ENCODE measurements at regions of chr11 and their contacts with region 1.

Region 1: GRCh38 chr11:112280268-112281126 is 19.8 kb upstream of the PLET1 start:
- DNase-seq: peak; percentile 85
- H3K4me3 ChIP-seq: peak overlapping the region; percentile 53 to 61
- H3K27ac ChIP-seq: peak overlapping the region in 1 of 2 experiments; percentile 53; a peak in 1 of 4 replicates
- H3K4me1 ChIP-seq: peaks cover 4 to 8% of the 10 kb centered on the region in 2 experiments; a peak in 3 of 4 replicates
- H3K27me3 ChIP-seq: no peaks in the 10 kb centered on the region
- CTCF ChIP-seq: peak; percentile 81
- EP300 ChIP-seq: no peak
- RAD21 ChIP-seq: peak; percentile 93

Region 2: DNA sequence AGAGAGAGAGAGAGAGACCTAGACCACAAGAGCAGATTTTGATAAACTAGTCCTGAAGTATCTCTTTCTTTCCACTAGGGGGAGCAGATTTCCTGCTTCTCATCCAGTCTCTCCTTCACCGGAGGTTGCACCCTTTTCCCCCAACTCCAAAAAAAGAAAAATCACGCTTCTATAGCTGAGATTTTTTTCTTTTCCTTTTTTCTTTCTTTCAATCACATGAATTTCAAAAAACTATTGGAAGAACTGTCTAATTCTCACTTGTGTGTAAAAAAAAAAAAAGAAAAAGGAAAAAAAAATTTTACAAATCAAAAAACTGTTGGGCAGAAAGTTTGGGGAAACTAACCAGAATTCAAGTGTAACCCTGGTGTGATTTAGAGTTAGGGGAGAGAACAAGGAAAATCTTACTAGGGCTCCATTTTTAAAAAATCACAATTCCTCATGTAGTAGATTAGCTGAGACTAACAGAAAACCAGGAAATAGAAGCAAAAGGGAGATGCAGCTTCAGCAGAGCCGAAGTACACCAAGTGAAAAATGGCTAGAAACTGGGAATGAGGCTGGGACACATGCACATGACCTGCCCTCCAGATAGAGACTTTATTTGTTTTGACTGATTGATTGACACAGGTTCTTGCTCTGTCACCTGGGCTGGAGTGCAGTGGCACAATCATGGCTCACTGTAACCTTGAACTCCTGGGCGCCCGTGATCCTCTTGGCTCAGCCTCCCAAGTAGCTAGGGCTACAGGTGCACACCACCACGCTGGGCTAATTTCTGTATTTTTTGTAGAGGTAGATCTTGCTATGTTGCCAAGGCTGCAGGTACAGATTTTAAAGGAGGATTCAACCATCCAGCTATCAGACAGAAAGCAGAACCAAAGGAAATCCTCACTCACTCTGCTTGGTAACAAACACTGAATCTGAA is 166.7 kb before region 1 on chr11:
- CTCF ChIA-PET with region 1: interaction called, 76 read pairs
- POLR2A ChIA-PET with region 1: no interaction called
- DNase-seq: peak; percentile 64
- H3K4me3 ChIP-seq: peak overlapping the region in 1 of 2 experiments; percentile 38; a peak in 1 of 4 replicates
- H3K27ac ChIP-seq: no peak overlapping the region
- H3K4me1 ChIP-seq: peaks cover 0 to 4% of the 10 kb centered on the region in 2 experiments; a peak in 1 of 4 replicates
- H3K27me3 ChIP-seq: no peaks in the 10 kb centered on the region
- CTCF ChIP-seq: peak; percentile 73
- EP300 ChIP-seq: no peak
- RAD21 ChIP-seq: peak; percentile 76

Region 3: GRCh38 chr11:112206071-112206470 is 74.4 kb before region 1 on chr11:
- CTCF ChIA-PET with region 1: interaction called, 16 read pairs
- POLR2A ChIA-PET with region 1: no interaction called
- DNase-seq: no peak
- H3K4me3 ChIP-seq: no peak overlapping the region
- H3K27ac ChIP-seq: no peak overlapping the region
- H3K4me1 ChIP-seq: no peaks in the 10 kb centered on the region
- H3K27me3 ChIP-seq: no peaks in the 10 kb centered on the region
- CTCF ChIP-seq: no peak
- EP300 ChIP-seq: no peak
- RAD21 ChIP-seq: no peak

Region 4: GRCh38 chr11:112219476-112220232 is 60.8 kb before region 1 on chr11:
- CTCF ChIA-PET with region 1: interaction called, 620 read pairs
- POLR2A ChIA-PET with region 1: interaction called, 4 read pairs
- DNase-seq: peak; percentile 72
- H3K4me3 ChIP-seq: no peak overlapping the region; a peak in 1 of 4 replicates
- H3K27ac ChIP-seq: no peak overlapping the region
- H3K4me1 ChIP-seq: peaks cover 3 to 21% of the 10 kb centered on the region in 2 experiments
- H3K27me3 ChIP-seq: no peaks in the 10 kb centered on the region
- CTCF ChIP-seq: peak; percentile 78
- EP300 ChIP-seq: no peak
- RAD21 ChIP-seq: peak; percentile 95

Region 5: DNA sequence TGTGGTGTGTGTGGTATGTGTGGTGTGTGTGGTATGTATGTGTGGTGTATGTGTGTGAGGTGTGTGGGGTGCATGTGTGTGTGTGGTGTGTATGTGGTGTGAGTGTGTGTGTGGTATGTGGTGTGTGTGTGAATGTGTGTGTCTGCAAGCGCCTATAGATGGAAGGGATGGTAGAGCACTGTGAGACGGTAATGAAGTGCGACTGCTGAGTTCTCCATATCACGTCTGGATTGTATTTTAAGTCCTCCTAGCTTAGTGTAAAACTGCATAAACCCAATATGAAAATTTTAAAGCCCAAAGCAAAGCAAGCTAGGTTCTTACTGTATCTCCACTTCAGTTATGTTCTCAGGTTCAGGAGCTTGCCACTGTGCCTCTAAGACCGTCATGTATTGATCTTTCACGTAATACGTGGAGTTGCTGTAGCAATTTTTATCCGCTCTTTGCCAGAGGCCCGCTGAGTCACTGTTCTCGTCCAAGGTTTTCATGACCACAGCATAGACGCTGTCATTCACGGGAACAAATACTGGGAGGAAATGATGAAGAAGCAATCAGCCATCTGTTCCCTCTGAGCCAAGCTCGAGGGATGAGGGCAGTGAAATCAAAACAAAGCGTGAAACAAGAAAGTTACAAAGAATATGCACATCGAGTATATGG is 25.3 kb before region 1 on chr11:
- CTCF ChIA-PET with region 1: interaction called, 11 read pairs
- POLR2A ChIA-PET with region 1: no interaction called
- DNase-seq: no peak
- H3K4me3 ChIP-seq: no peak overlapping the region
- H3K27ac ChIP-seq: no peak overlapping the region
- H3K4me1 ChIP-seq: no peaks in the 10 kb centered on the region
- H3K27me3 ChIP-seq: no peaks in the 10 kb centered on the region
- CTCF ChIP-seq: no peak
- EP300 ChIP-seq: no peak
- RAD21 ChIP-seq: no peak

Measured in SK-N-SH (cell line).